Calu3 (cell line): ENCODE measurements at regions of chr14 and their contacts with region 1.

Region 1: DNA sequence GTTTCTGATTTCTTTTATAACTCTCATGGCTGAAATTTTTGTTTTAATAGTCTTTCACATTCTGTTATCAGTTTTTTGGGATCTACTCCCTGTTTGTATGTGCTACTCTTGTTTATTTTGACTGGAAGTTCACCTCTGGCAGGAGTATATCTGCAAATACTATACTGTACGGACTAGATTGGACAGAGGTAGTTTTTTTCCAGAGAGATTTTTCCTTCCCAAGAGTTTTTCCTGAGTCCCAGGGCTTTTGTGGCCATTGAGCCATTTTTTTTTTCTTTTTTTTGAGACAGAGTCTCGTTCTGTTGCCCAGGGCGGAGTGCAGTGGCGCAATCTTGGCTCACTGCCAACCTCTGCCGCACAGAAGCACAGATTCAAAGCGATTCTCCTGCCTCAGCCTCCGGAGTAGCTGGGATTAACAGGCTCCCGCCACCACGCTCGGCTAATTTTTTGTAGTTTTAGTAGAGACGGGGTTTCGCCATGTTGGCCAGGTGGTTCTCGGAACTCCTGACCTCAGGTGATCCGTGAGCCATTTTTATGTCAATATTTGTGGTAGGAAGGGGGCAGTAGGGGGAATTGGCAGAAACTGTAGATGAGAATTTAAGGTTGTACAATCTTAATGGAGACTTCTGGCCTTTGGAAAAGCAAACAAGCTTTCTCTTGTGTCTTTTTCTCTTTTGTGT is 19.3 kb downstream of the KTN1 start:
- DNase-seq: peak; percentile 82
- H3K4me3 Mint-ChIP-seq: peak overlapping the region; percentile 61
- H3K27ac Mint-ChIP-seq: peak overlapping the region; percentile 39
- H3K4me1 Mint-ChIP-seq: peaks cover 17% of the 10 kb centered on the region
- H3K27me3 Mint-ChIP-seq: no peaks in the 10 kb centered on the region
- CTCF ChIP-seq: no peak

Region 2: DNA sequence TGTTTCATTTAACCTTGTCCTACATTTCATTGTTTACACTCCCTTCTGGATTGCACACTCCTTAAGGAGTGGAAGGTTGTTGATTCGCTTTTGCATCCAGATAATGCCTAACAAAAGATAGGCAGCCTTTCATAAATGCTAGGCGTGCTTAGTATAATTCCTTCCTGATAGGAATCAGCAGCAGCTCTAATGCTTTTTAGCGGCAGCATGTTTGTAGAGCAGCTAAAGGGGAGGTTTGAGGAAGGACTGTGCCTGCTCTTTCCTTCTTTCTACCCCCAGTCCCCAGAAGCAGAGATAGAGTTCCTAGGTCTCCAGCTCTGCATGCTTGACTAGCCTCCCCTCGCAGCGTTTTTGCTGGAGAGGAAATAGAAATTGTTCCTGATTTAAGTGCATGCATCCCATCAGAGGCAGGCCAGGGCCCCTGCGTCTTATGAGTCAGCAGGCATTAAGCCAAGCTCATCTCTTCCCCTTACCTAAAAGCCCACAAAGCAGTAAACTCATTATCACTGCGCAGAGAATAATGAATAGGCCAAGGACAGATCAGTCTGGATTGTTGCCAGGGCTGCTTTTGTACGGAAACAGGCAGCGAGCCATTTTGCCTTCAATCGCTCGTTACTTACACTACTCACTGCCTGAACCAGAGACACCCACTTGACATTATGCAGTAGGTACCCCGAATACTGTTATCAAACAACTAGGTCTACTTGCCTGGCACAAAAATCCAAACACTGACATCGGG is 144.9 kb before region 1 on chr14:
- CTCF ChIA-PET with region 1: no interaction called
- intact Hi-C with region 1: loop called (anchors 10 kb)
- DNase-seq: peak; percentile 41
- H3K4me3 Mint-ChIP-seq: peak overlapping the region; percentile 43
- H3K27ac Mint-ChIP-seq: no peak overlapping the region
- H3K4me1 Mint-ChIP-seq: peaks cover 45% of the 10 kb centered on the region
- H3K27me3 Mint-ChIP-seq: no peaks in the 10 kb centered on the region
- CTCF ChIP-seq: no peak

Region 3: DNA sequence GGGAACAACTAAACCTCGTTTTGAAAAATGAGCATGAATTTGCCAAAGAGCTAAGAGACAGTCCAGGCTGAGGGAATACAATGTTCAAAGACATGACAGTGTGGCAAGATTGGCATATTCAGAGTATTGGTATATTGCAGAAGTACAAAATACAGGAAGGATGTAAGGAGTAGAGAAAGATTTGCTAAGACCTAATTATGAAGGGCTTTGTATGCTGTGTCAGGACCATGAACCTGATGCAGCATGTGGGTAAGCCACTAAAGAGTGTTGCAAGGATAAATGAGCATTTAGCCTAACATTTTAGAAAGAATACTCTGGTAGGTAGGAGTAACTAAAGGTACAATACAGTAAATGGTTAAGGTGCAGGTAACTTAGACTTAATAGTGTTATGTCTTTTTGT is 45.8 kb after region 1 on chr14:
- CTCF ChIA-PET with region 1: no interaction called
- intact Hi-C with region 1: no loop called
- DNase-seq: no peak
- H3K4me3 Mint-ChIP-seq: no peak overlapping the region
- H3K27ac Mint-ChIP-seq: no peak overlapping the region
- H3K4me1 Mint-ChIP-seq: no peaks in the 10 kb centered on the region
- H3K27me3 Mint-ChIP-seq: no peaks in the 10 kb centered on the region
- CTCF ChIP-seq: no peak

Region 4: DNA sequence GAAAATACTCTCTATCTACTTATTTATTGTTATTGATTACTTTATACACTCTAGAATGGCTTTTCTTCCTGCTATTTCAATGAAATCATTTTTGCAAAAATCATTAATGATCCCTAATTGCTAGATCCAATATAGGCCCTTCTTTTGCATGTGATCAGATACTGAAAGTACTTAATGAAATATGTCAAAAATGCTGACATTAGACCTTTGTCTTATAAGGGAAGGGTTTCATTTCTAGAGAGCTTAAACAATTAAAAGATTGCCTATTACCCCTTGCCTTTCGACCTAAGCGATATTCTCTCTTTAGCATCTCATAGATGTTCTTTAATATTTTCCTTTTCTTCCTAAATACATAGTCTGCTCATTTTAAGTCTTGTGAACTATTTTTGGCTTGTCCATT is 81.7 kb after region 1 on chr14:
- CTCF ChIA-PET with region 1: no interaction called
- intact Hi-C with region 1: no loop called
- DNase-seq: no peak
- H3K4me3 Mint-ChIP-seq: no peak overlapping the region
- H3K27ac Mint-ChIP-seq: no peak overlapping the region
- H3K4me1 Mint-ChIP-seq: no peaks in the 10 kb centered on the region
- H3K27me3 Mint-ChIP-seq: no peaks in the 10 kb centered on the region
- CTCF ChIP-seq: no peak